ENCODE measurements at regions of chr2 and their contacts with region 1.

Region 1: DNA sequence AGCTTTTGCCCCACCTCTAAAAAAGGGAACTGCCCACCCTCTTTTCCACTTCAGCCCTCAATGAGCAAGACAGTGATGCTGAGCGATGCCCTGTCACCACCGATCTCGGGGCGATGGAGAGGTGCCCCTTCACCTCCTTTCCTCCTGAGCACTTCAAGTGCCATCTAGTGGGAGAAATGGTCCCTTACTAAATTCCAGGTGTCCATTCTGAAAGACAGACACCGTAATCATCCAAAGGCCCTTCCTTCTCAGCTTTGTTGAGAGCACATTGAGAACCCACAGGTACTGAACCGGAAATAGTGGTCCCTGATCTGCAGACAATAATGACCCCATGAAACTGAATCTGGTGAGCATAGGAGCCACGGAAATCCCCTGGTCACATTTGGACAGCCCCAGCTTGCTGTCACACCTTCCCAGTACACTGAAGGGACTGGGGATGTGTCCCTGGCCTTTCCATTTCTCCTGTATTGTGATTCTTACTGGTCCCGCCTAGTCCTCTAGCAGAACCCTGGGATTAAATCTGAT is 38.5 kb downstream of the KCTD18 start:
- DNase-seq: no peak
- H3K4me3 Mint-ChIP-seq: no peak overlapping the region
- H3K27ac Mint-ChIP-seq: peak overlapping the region; percentile 47
- H3K4me1 Mint-ChIP-seq: peaks cover 36% of the 10 kb centered on the region
- H3K27me3 Mint-ChIP-seq: no peaks in the 10 kb centered on the region

Region 2: GRCh38 chr2:199911052-199911876 is 560.1 kb before region 1 on chr2 and contains the start of gene C2orf69:
- intact Hi-C with region 1: loop called (anchors 5 kb)
- DNase-seq: peak; percentile 86
- H3K4me3 Mint-ChIP-seq: peak within 1 kb of the TSS; percentile 100
- H3K27ac Mint-ChIP-seq: peak within 1 kb of the TSS; percentile 99
- H3K4me1 Mint-ChIP-seq: peaks cover 39% of the 10 kb centered on the region
- H3K27me3 Mint-ChIP-seq: peaks cover 3% of the 10 kb centered on the region
- total RNA-seq, gene C2orf69: 16.6 and 18.0 TPM in 2 replicates

Region 3: GRCh38 chr2:200306196-200306930 is 165.0 kb before region 1 on chr2 and contains the start of gene SPATS2L:
- intact Hi-C with region 1: loop called (anchors 2 kb)
- DNase-seq: peak; percentile 44
- H3K4me3 Mint-ChIP-seq: peak within 1 kb of the TSS; percentile 90
- H3K27ac Mint-ChIP-seq: peak within 1 kb of the TSS; percentile 85
- H3K4me1 Mint-ChIP-seq: peaks cover 35% of the 10 kb centered on the region
- H3K27me3 Mint-ChIP-seq: peaks cover 10% of the 10 kb centered on the region
- total RNA-seq, gene SPATS2L: 35.1 and 38.0 TPM in 2 replicates

Region 4: DNA sequence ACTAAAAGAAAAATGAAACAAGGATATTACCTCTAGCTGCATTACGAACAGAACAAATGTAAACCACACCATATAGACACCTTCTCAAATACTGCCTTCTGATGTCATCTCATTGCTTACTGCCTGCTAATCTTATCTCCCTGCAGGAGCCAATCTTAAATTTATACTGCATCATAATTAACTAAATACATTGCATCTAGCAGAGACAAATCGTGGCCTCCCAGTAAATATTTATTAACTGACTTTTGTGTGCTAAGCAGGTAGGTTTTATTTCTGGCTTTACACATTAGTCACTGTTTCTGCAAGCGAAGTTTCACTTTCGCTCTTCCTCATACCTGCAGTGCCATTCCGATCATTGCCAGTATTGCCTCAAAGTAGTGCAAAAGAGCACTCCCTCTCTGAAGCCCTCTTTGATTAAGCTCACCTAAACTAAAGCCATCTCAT is 97.4 kb before region 1 on chr2:
- intact Hi-C with region 1: loop called (anchors 1 kb)
- DNase-seq: peak; percentile 49
- H3K4me3 Mint-ChIP-seq: peak overlapping the region; percentile 79
- H3K27ac Mint-ChIP-seq: peak overlapping the region; percentile 86
- H3K4me1 Mint-ChIP-seq: peaks cover 55% of the 10 kb centered on the region
- H3K27me3 Mint-ChIP-seq: no peaks in the 10 kb centered on the region

Region 5: DNA sequence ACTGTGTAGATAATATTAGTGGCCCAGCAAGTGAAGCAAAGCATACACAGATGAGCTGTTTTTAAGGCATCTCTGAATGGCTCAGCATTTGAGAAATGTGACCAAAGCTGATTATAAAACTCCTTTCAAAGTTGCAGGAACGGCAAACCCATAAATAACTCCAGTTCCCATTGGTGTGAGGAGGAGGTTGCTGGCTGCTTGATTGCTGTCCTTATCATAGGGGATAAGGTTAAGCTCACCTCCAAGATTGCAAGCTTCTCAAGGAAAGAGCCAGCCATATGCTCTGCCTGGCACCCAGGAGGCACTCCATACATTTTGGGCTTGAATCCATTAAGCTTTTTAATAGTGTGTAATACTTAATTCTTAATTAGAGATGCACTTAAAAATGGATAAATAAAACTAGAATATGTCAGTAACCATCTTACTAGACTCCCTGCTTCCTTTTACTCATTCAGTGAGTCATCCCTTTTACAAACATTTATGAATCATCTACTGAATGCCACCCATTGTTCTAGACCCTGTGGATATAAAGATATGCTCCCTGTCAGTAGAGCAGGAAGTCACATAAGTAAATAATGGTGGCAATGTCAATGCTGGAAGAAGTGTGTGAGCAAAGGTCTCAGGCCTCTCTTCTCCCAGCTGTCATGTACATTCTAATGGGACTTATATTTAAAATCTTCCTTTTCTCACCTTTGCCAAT is 65.6 kb before region 1 on chr2:
- intact Hi-C with region 1: loop called (anchors 2 kb)
- DNase-seq: no peak
- H3K4me3 Mint-ChIP-seq: no peak overlapping the region
- H3K27ac Mint-ChIP-seq: peak overlapping the region; percentile 25
- H3K4me1 Mint-ChIP-seq: peaks cover 68% of the 10 kb centered on the region
- H3K27me3 Mint-ChIP-seq: no peaks in the 10 kb centered on the region

Region 6: GRCh38 chr2:200447139-200447855 is 24.1 kb before region 1 on chr2:
- intact Hi-C with region 1: loop called (anchors 1 kb)
- DNase-seq: no peak
- H3K4me3 Mint-ChIP-seq: peak overlapping the region; percentile 35
- H3K27ac Mint-ChIP-seq: peak overlapping the region; percentile 72
- H3K4me1 Mint-ChIP-seq: peaks cover 22% of the 10 kb centered on the region
- H3K27me3 Mint-ChIP-seq: no peaks in the 10 kb centered on the region

Region 7: DNA sequence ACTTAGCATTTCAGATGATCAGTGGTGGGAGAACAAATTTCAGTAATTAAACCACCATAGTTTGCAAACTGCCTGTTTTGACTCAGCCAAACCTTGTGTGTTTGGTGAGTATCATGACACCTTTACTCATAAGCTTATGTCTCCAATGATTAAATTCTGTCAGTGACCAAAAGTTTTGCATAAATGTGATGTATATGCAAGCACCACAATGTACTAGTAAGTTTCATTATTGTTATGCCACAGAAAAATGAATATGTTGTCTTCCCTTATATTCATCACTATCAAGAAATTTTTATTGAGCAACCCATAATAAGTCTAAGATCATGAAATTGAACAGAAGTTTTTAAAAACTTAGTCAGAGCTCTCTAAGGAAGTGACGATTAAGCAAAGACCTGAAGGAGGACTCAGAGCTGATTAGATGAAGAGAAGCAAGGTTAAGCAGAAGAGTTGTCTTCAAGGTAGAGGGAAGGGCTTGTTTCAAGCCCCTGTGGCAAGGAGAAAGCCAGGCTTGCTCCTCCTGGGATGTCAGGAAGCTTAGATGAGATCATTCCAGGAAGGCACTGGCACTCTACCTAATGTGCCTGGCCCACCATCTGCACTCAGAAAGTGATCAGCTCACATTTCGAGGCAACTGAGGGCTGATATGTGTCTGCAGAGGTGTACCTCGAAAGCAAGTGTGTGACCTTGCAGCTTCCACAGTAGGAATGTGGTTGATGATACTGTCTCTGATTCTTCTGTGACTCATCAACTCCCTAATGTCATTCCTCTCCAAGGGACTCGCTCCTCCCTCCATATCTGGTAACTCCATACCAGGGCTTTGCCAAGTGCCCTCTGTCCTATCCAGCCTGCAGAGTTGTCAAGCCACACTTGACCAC is 16.2 kb before region 1 on chr2:
- intact Hi-C with region 1: loop called (anchors 1 kb)
- DNase-seq: no peak
- H3K4me3 Mint-ChIP-seq: peak overlapping the region; percentile 31
- H3K27ac Mint-ChIP-seq: peak overlapping the region; percentile 18
- H3K4me1 Mint-ChIP-seq: peaks cover 27% of the 10 kb centered on the region
- H3K27me3 Mint-ChIP-seq: no peaks in the 10 kb centered on the region

Measured in activated T-helper 1 cell treated with anti-CD3 and anti-CD28 coated beads, Interleukin-12 subunit alpha, Interleukin-12 subunit beta, Interleukin-2, Interleukin-4 antibody, amounts not matched to agents 30 ng/mL and 10 ng/mL and 1 ng/mL, durations not matched to agents 14 hours and 24 hours and 36 hours (primary cell).